ENCODE measurements at regions of chr2 and their contacts with region 1.

Region 1: GRCh38 chr2:98086491-98087446 is at the start of gene VWA3B:
- DNase-seq: no peak
- H3K4me3 ChIP-seq: peak within 1 kb of the TSS; percentile 54
- CTCF ChIP-seq: no peak

Region 2: DNA sequence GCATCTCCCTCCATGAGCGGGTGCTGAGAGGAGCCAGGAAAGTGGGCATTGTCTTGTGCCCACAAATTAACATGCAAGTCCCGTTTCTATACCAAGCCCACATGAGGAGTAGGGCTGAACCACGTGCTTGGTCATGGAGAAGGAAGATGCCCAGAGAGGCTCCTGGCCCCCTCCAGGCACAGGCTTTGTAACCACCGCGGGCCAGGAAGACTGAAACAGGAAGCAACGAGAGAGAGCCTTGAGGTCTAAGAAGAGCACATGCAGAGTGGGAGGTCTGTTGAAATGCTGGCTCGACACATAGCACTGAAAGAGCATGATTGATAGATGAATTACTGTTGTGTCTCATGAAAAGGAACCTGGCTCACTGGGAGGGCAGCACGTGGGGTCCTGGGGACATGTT is 36.5 kb after region 1 on chr2:
- in situ Hi-C with region 1: loop called (anchors 5 kb)
- DNase-seq: no peak
- H3K4me3 ChIP-seq: no peak overlapping the region
- CTCF ChIP-seq: no peak